ENCODE measurements at regions of chr9 and their contacts with region 1.

Region 1: GRCh38 chr9:97921959-97922724 is at the start of gene TRMO:
- DNase-seq: peak; percentile 94 to 100 (median 99)
- ATAC-seq: peak; percentile 83
- H3K4me3 ChIP-seq: peak within 1 kb of the TSS; percentile 70 to 89
- H3K4me3 Mint-ChIP-seq: peak within 1 kb of the TSS; percentile 87
- H3K27ac ChIP-seq: peak within 1 kb of the TSS; percentile 97 to 100
- H3K27ac Mint-ChIP-seq: peak within 1 kb of the TSS; percentile 99
- H3K4me1 ChIP-seq: peaks cover 42% of the 10 kb centered on the region
- H3K4me1 Mint-ChIP-seq: peaks cover 52% of the 10 kb centered on the region
- H3K27me3 ChIP-seq: no peaks in the 10 kb centered on the region
- H3K27me3 Mint-ChIP-seq: no peaks in the 10 kb centered on the region
- CTCF ChIP-seq: peak; percentile 77
- total RNA-seq, gene TRMO: 45.7 to 50.6 TPM

Region 2: GRCh38 chr9:96777426-96777864 is 1144.7 kb before region 1 on chr9:
- CTCF ChIA-PET with region 1: no interaction called
- POLR2A ChIA-PET with region 1: no interaction called
- intact Hi-C with region 1: no loop called
- DNase-seq: no peak
- ATAC-seq: no peak
- H3K4me3 ChIP-seq: peak overlapping the region; percentile 54 to 70
- H3K4me3 Mint-ChIP-seq: peak overlapping the region; percentile 97
- H3K27ac ChIP-seq: peak overlapping the region; percentile 76 to 77
- H3K27ac Mint-ChIP-seq: peak overlapping the region; percentile 99
- H3K4me1 ChIP-seq: peaks cover 14% of the 10 kb centered on the region
- H3K4me1 Mint-ChIP-seq: peaks cover 52% of the 10 kb centered on the region
- H3K27me3 ChIP-seq: no peaks in the 10 kb centered on the region
- H3K27me3 Mint-ChIP-seq: no peaks in the 10 kb centered on the region
- CTCF ChIP-seq: no peak

Region 3: DNA sequence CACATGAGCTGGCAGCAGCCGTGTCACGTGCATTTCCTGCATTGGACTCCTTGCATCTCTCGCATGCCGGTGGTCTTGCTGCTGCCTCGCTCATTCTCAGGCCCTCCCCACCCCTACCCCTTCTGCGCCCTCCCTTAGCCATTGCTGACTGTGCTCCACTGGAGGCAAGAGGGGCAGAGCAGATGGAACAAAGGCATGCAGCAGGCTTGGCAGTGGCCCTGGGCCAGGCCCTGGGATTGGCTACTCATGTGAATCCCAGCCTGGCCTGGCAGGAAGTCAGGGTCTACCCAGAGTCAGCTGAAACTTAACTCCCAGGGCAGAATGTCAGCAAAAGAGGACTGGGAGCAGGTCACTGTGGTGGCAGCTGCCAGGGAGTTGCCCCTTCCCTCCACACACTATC is 351.2 kb before region 1 on chr9:
- CTCF ChIA-PET with region 1: no interaction called
- POLR2A ChIA-PET with region 1: no interaction called
- intact Hi-C with region 1: no loop called
- DNase-seq: peak in 1 of 9 experiments; percentile 34
- ATAC-seq: no peak
- H3K4me3 ChIP-seq: no peak overlapping the region
- H3K4me3 Mint-ChIP-seq: no peak overlapping the region
- H3K27ac ChIP-seq: no peak overlapping the region
- H3K27ac Mint-ChIP-seq: no peak overlapping the region
- H3K4me1 ChIP-seq: no peaks in the 10 kb centered on the region
- H3K4me1 Mint-ChIP-seq: peaks cover 13% of the 10 kb centered on the region
- H3K27me3 ChIP-seq: no peaks in the 10 kb centered on the region
- H3K27me3 Mint-ChIP-seq: no peaks in the 10 kb centered on the region
- CTCF ChIP-seq: no peak

Region 4: GRCh38 chr9:97696803-97697601 is 225.1 kb before region 1 on chr9 and contains the start of gene XPA:
- CTCF ChIA-PET with region 1: interaction called, 10 read pairs
- POLR2A ChIA-PET with region 1: interaction called, 17 read pairs
- intact Hi-C with region 1: loop called in 1 of 2 experiments (anchors 5 kb)
- DNase-seq: peak; percentile 90 to 99 (median 97)
- ATAC-seq: peak; percentile 94
- H3K4me3 ChIP-seq: peak within 1 kb of the TSS; percentile 68 to 79
- H3K4me3 Mint-ChIP-seq: peak within 1 kb of the TSS; percentile 83
- H3K27ac ChIP-seq: peak within 1 kb of the TSS; percentile 60 to 79
- H3K27ac Mint-ChIP-seq: peak within 1 kb of the TSS; percentile 92
- H3K4me1 ChIP-seq: peaks cover 39% of the 10 kb centered on the region
- H3K4me1 Mint-ChIP-seq: peaks cover 53% of the 10 kb centered on the region
- H3K27me3 ChIP-seq: no peaks in the 10 kb centered on the region
- H3K27me3 Mint-ChIP-seq: peaks cover 4% of the 10 kb centered on the region
- CTCF ChIP-seq: no peak
- total RNA-seq, gene XPA: 21.1 to 24.9 TPM

Region 5: GRCh38 chr9:97873877-97874276 is 48.3 kb before region 1 on chr9:
- CTCF ChIA-PET with region 1: no interaction called
- POLR2A ChIA-PET with region 1: no interaction called
- intact Hi-C with region 1: no loop called
- DNase-seq: no peak
- ATAC-seq: no peak
- H3K4me3 ChIP-seq: no peak overlapping the region
- H3K4me3 Mint-ChIP-seq: no peak overlapping the region
- H3K27ac ChIP-seq: no peak overlapping the region
- H3K27ac Mint-ChIP-seq: no peak overlapping the region
- H3K4me1 ChIP-seq: no peaks in the 10 kb centered on the region
- H3K4me1 Mint-ChIP-seq: no peaks in the 10 kb centered on the region
- H3K27me3 ChIP-seq: peaks cover 0 to 4% of the 10 kb centered on the region in 2 experiments
- H3K27me3 Mint-ChIP-seq: peaks cover 5% of the 10 kb centered on the region
- CTCF ChIP-seq: no peak

Region 6: GRCh38 chr9:97906236-97906831 is 15.8 kb before region 1 on chr9:
- CTCF ChIA-PET with region 1: interaction called, 196 read pairs
- POLR2A ChIA-PET with region 1: interaction called, 83 read pairs
- intact Hi-C with region 1: loop called (anchors 1 kb)
- DNase-seq: peak in 4 of 9 experiments; percentile 56 to 78 (median 68)
- ATAC-seq: peak; percentile 26
- H3K4me3 ChIP-seq: peak overlapping the region; percentile 4 to 34
- H3K4me3 Mint-ChIP-seq: peak overlapping the region; percentile 80
- H3K27ac ChIP-seq: peak overlapping the region; percentile 54 to 79
- H3K27ac Mint-ChIP-seq: peak overlapping the region; percentile 97
- H3K4me1 ChIP-seq: peaks cover 92% of the 10 kb centered on the region
- H3K4me1 Mint-ChIP-seq: peaks cover 88% of the 10 kb centered on the region
- H3K27me3 ChIP-seq: no peaks in the 10 kb centered on the region
- H3K27me3 Mint-ChIP-seq: no peaks in the 10 kb centered on the region
- CTCF ChIP-seq: no peak

Region 7: DNA sequence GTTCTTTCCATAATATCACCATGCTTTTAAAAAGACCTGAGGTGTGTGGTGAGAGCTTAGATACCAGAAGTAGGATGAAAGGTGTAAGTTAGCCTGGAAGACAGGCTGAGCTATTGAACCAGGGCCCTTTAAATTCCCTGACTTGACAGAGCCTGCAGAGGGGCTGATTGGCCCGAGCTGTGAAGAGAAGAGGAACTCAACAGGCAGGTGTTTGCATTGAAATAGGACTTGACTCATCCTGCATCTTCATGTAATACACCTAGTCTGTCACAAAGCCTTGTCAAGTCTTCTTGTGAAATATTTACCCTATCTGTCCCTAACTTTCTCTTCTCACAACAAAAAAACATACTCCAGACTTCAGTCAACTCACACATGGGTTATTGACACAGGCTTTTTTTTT is 44.4 kb after region 1 on chr9:
- CTCF ChIA-PET with region 1: interaction called, 57 read pairs
- POLR2A ChIA-PET with region 1: interaction called, 5 read pairs
- intact Hi-C with region 1: no loop called
- DNase-seq: no peak
- ATAC-seq: no peak
- H3K4me3 ChIP-seq: no peak overlapping the region
- H3K4me3 Mint-ChIP-seq: no peak overlapping the region
- H3K27ac ChIP-seq: no peak overlapping the region
- H3K27ac Mint-ChIP-seq: no peak overlapping the region
- H3K4me1 ChIP-seq: peaks cover 12% of the 10 kb centered on the region
- H3K4me1 Mint-ChIP-seq: peaks cover 16% of the 10 kb centered on the region
- H3K27me3 ChIP-seq: no peaks in the 10 kb centered on the region
- H3K27me3 Mint-ChIP-seq: no peaks in the 10 kb centered on the region
- CTCF ChIP-seq: no peak

Region 8: GRCh38 chr9:98010445-98010844 is 88.3 kb after region 1 on chr9:
- CTCF ChIA-PET with region 1: interaction called, 12 read pairs
- POLR2A ChIA-PET with region 1: interaction called, 3 read pairs
- intact Hi-C with region 1: no loop called
- DNase-seq: peak in 1 of 9 experiments; percentile 24
- ATAC-seq: peak; percentile 49
- H3K4me3 ChIP-seq: no peak overlapping the region
- H3K4me3 Mint-ChIP-seq: no peak overlapping the region
- H3K27ac ChIP-seq: no peak overlapping the region
- H3K27ac Mint-ChIP-seq: peak overlapping the region; percentile 27
- H3K4me1 ChIP-seq: no peaks in the 10 kb centered on the region
- H3K4me1 Mint-ChIP-seq: peaks cover 35% of the 10 kb centered on the region
- H3K27me3 ChIP-seq: no peaks in the 10 kb centered on the region
- H3K27me3 Mint-ChIP-seq: no peaks in the 10 kb centered on the region
- CTCF ChIP-seq: no peak

Region 9: GRCh38 chr9:98101868-98102273 is 179.7 kb after region 1 on chr9:
- CTCF ChIA-PET with region 1: interaction called, 4 read pairs
- POLR2A ChIA-PET with region 1: interaction called, 3 read pairs
- intact Hi-C with region 1: loop called (anchors 5 kb)
- DNase-seq: peak; percentile 64 to 97 (median 82)
- ATAC-seq: peak; percentile 95
- H3K4me3 ChIP-seq: peak overlapping the region; percentile 3 to 8
- H3K4me3 Mint-ChIP-seq: peak overlapping the region; percentile 68
- H3K27ac ChIP-seq: peak overlapping the region; percentile 33 to 76
- H3K27ac Mint-ChIP-seq: peak overlapping the region; percentile 97
- H3K4me1 ChIP-seq: peaks cover 87% of the 10 kb centered on the region
- H3K4me1 Mint-ChIP-seq: peaks cover 82% of the 10 kb centered on the region
- H3K27me3 ChIP-seq: no peaks in the 10 kb centered on the region
- H3K27me3 Mint-ChIP-seq: no peaks in the 10 kb centered on the region
- CTCF ChIP-seq: no peak

Region 10: DNA sequence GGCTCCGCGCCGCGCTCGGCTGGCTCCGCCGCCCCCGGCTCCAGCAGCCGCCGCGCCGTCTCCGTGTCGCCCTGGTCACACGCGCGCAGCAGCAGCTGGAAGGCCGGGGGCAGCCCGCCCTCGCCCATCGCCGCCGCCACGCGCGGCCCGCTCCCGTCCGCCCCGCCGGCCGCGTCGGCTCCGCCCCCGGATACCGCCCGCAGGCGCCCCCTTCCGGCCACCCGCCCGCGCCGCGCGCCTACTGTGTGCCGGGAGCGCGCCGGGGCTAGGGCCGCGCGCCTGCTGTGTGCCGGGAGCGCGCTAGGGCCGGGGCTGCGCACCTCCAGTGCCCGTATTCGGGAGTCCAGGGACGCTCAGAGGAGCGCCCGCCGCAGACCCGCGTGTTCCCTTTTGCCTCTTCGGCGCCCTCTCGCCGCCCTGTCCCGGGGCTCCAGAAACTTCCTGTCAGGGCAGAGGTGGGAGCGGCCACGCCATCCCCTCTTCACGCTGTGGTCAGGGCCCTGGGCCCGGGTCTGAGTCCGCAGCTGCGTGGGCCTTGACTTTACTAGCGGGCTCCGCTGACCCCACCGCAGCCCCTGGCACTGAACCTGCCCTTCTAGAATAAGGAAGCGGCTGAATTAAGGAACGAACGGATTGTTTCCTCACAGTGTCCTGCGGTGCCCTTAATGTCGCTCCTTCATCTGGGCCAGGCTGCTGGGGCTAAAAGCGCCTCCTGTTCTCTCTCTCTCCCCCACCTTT is 874.4 kb after region 1 on chr9 and contains the start of gene ANKS6:
- CTCF ChIA-PET with region 1: no interaction called
- POLR2A ChIA-PET with region 1: no interaction called
- intact Hi-C with region 1: loop called in 1 of 2 experiments (anchors 10 kb)
- DNase-seq: peak; percentile 63 to 91 (median 85)
- ATAC-seq: peak; percentile 92
- H3K4me3 ChIP-seq: peak within 1 kb of the TSS; percentile 77 to 95
- H3K4me3 Mint-ChIP-seq: peak within 1 kb of the TSS; percentile 88
- H3K27ac ChIP-seq: peak within 1 kb of the TSS; percentile 61 to 66
- H3K27ac Mint-ChIP-seq: peak within 1 kb of the TSS; percentile 85
- H3K4me1 ChIP-seq: peaks cover 15% of the 10 kb centered on the region
- H3K4me1 Mint-ChIP-seq: peaks cover 32% of the 10 kb centered on the region
- H3K27me3 ChIP-seq: no peaks in the 10 kb centered on the region
- H3K27me3 Mint-ChIP-seq: no peaks in the 10 kb centered on the region
- CTCF ChIP-seq: peak; percentile 28
- total RNA-seq, gene ANKS6: 10.6 to 12.7 TPM